Naive thymus-derived CD4-positive, alpha-beta T cell (primary cell): ENCODE measurements at regions of chrX and their contacts with region 1.

Region 1: DNA sequence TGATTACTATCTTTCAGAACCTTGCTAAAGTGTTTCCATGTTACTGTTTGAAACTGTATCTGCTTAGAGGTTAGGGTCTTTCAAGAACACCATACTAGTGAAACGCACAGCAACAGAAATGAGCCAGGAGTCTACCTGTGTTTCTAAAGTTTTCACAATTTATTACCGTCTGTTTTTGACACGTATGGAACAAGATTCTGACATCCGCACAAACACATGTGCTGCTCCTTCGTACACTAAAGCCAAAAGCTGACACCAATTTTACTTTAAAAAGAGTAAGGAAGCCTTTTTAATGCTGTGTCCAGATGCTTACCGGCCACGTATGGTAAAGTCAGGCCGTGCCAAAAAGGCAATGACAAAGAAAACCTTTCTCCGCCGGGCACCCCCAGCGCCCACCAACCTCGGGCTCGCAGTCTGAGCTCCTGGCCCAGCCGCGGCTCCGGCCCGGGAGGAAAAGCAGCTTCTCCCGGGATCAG is 532 bp downstream of the RPS4X start:
- DNase-seq: peak in 1 of 9 donors; percentile 6
- ATAC-seq: peak; percentile 3
- H3K4me3 ChIP-seq: peak overlapping the region; percentile 70
- H3K4me3 Mint-ChIP-seq: peak overlapping the region; percentile 74 to 92 (median 87)
- H3K27ac ChIP-seq: peak overlapping the region; percentile 91
- H3K27ac Mint-ChIP-seq: peak overlapping the region; percentile 78 to 96 (median 92)
- H3K4me1 ChIP-seq: peaks cover 16 to 30% of the 10 kb centered on the region in 2 donors
- H3K4me1 Mint-ChIP-seq: peaks cover 13 to 47% (median 37%) of the 10 kb centered on the region in 7 donors
- H3K27me3 ChIP-seq: no peaks in the 10 kb centered on the region
- H3K27me3 Mint-ChIP-seq: peaks cover 0 to 12% (median 0%) of the 10 kb centered on the region in 5 donors

Region 2: DNA sequence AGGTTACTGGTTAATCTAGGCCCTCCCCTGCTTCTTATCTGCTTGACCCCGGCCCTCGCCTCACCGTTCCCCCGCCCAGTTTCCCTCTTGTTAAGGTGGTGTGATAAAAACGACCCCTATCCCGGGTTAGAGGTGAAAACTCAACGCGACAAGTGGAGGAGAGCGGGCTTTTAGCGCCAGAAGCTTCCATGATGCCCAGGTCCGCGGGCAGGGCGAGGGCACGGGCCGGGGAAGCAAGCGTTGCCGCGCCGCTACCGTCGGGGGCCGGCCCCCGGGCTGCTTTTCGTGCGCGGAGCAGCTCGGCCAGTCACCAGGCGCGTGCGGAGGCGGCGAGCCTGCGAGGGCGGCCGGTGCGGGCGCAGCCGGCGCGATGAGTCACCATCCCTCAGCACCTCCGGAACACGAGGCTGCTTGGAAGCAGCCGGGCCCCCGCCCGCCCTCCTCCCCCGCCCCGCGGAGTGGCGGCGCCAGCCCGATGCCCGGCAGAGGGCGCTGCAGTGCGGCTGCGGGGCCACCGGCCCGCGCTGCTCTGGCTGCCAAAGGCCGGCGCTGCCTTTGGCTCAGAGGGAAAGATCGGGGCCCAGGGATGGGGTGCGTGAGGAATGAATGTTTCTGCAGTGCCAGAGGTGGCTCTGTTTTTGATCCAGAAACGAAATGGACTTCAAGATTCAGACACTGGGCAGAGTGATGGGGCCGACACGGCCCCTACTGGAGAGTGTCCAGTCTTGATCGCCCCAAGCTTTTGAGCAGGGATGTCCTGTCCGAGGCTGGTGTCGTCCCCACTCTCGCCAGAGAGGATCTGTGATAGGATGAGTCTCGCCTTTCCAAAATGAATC is 258.0 kb before region 1 on chrX:
- CTCF ChIA-PET with region 1: interaction called, 3 read pairs
- POLR2A ChIA-PET with region 1: no interaction called
- intact Hi-C with region 1: loop called in 1 of 2 experiments (anchors 5 kb)
- DNase-seq: peak; percentile 41 to 83 (median 69)
- ATAC-seq: peak; percentile 98
- H3K4me3 ChIP-seq: peak overlapping the region; percentile 24
- H3K4me3 Mint-ChIP-seq: peak overlapping the region in 6 of 10 donors; percentile 17 to 51 (median 20)
- H3K27ac ChIP-seq: no peak overlapping the region
- H3K27ac Mint-ChIP-seq: no peak overlapping the region
- H3K4me1 ChIP-seq: peaks cover 0 to 5% of the 10 kb centered on the region in 2 donors
- H3K4me1 Mint-ChIP-seq: peaks cover 0 to 14% (median 0%) of the 10 kb centered on the region in 7 donors
- H3K27me3 ChIP-seq: no peaks in the 10 kb centered on the region
- H3K27me3 Mint-ChIP-seq: peaks cover 2 to 70% (median 3%) of the 10 kb centered on the region in 5 donors

Region 3: DNA sequence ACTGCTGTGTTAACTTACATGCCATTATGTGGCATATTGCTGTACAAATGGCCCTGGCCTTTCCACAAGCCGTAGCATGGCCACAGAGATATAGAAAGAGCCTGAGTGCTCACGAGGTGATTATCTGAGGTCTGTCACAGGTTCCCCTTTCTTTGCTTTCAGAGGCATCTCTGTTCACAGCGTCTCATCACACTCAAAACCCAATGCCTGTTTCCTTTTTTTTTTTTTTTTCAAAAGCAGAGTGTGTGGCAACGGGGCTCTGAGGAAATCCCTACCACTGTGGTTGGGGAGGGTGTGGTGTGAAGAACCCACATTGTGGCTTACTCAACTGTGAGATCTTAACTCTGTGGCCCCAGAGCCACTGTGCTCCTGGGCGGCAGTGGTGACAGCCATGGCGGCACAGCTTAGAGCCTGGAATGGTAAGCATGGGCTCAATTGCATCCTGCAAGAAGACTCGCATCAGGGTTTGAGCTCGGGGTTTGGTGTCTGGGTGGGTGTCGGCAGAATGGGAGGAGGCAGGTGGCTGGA is 175.6 kb before region 1 on chrX:
- CTCF ChIA-PET with region 1: no interaction called
- POLR2A ChIA-PET with region 1: no interaction called
- intact Hi-C with region 1: loop called in 1 of 2 experiments (anchors 2 kb)
- DNase-seq: peak; percentile 24 to 78 (median 67)
- ATAC-seq: peak; percentile 84
- H3K4me3 ChIP-seq: peak overlapping the region; percentile 59
- H3K4me3 Mint-ChIP-seq: peak overlapping the region; percentile 25 to 81 (median 64)
- H3K27ac ChIP-seq: no peak overlapping the region
- H3K27ac Mint-ChIP-seq: peak overlapping the region in 6 of 9 donors; percentile 14 to 82 (median 58)
- H3K4me1 ChIP-seq: peaks cover 29 to 50% of the 10 kb centered on the region in 2 donors
- H3K4me1 Mint-ChIP-seq: peaks cover 10 to 39% (median 33%) of the 10 kb centered on the region in 7 donors
- H3K27me3 ChIP-seq: no peaks in the 10 kb centered on the region
- H3K27me3 Mint-ChIP-seq: peaks cover 6 to 60% (median 12%) of the 10 kb centered on the region in 5 donors

Region 4: GRCh38 chrX:72169008-72169728 is 107.3 kb before region 1 on chrX:
- CTCF ChIA-PET with region 1: no interaction called
- POLR2A ChIA-PET with region 1: no interaction called
- intact Hi-C with region 1: no loop called
- DNase-seq: peak in 7 of 9 donors; percentile 52 to 71 (median 58)
- ATAC-seq: peak; percentile 94
- H3K4me3 ChIP-seq: peak overlapping the region; percentile 28
- H3K4me3 Mint-ChIP-seq: peak overlapping the region; percentile 46 to 89 (median 84)
- H3K27ac ChIP-seq: peak overlapping the region; percentile 66
- H3K27ac Mint-ChIP-seq: peak overlapping the region; percentile 87 to 97 (median 90)
- H3K4me1 ChIP-seq: no peaks in the 10 kb centered on the region
- H3K4me1 Mint-ChIP-seq: peaks cover 0 to 10% (median 5%) of the 10 kb centered on the region in 7 donors
- H3K27me3 ChIP-seq: no peaks in the 10 kb centered on the region
- H3K27me3 Mint-ChIP-seq: peaks cover 0 to 5% (median 0%) of the 10 kb centered on the region in 5 donors

Region 5: GRCh38 chrX:72238721-72239475 is 37.6 kb before region 1 on chrX and contains the start of gene ERCC6L:
- CTCF ChIA-PET with region 1: interaction called, 3 read pairs
- POLR2A ChIA-PET with region 1: interaction called, 9 read pairs
- intact Hi-C with region 1: loop called in 1 of 2 experiments (anchors 2 kb)
- DNase-seq: peak; percentile 71 to 87 (median 81)
- ATAC-seq: peak; percentile 99
- H3K4me3 ChIP-seq: peak within 1 kb of the TSS; percentile 62
- H3K4me3 Mint-ChIP-seq: peak within 1 kb of the TSS; percentile 45 to 87 (median 76)
- H3K27ac ChIP-seq: peak within 1 kb of the TSS; percentile 47
- H3K27ac Mint-ChIP-seq: peak within 1 kb of the TSS in 7 of 9 donors; percentile 48 to 91 (median 56)
- H3K4me1 ChIP-seq: no peaks in the 10 kb centered on the region
- H3K4me1 Mint-ChIP-seq: peaks cover 0 to 17% (median 0%) of the 10 kb centered on the region in 7 donors
- H3K27me3 ChIP-seq: no peaks in the 10 kb centered on the region
- H3K27me3 Mint-ChIP-seq: no peaks in the 10 kb centered on the region
- total RNA-seq, gene ERCC6L: 0.11 to 6.6 (median 0.16) TPM

Region 6: DNA sequence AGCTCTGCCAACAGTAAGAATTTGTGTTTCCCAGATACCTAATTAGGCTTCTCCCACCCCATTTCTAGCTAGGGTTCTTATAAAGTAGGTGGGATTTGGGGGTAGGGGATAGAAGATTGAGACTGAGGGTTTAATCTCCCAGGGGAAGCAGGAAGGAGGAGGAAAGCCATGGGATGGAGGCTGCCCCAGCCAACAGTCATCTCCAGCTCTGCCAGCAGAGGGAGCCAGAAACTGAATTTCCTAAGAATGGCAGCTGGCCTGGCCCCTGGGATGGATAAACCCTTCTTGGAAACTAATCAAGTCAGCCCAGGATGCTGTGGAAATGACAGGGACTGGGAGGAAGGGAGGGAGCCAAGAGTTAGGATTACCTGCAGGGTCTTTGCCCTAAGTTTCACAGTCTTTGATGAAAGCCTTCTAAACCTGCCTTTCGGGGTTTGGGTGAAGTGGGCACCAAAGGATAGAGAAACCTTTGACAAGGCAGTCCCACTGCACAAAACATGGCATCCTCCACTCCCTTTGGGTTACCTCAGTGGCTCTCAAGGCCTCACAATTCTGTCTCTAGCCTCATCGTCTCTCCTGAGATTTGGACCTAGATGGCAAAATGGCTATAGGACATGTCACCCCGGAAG is 30.9 kb before region 1 on chrX:
- CTCF ChIA-PET with region 1: no interaction called
- POLR2A ChIA-PET with region 1: interaction called, 3 read pairs
- intact Hi-C with region 1: loop called in 1 of 2 experiments (anchors 1 kb)
- DNase-seq: peak in 6 of 9 donors; percentile 5 to 42 (median 18)
- ATAC-seq: no peak
- H3K4me3 ChIP-seq: no peak overlapping the region
- H3K4me3 Mint-ChIP-seq: no peak overlapping the region
- H3K27ac ChIP-seq: no peak overlapping the region
- H3K27ac Mint-ChIP-seq: no peak overlapping the region
- H3K4me1 ChIP-seq: no peaks in the 10 kb centered on the region
- H3K4me1 Mint-ChIP-seq: peaks cover 0 to 2% (median 0%) of the 10 kb centered on the region in 7 donors
- H3K27me3 ChIP-seq: no peaks in the 10 kb centered on the region
- H3K27me3 Mint-ChIP-seq: no peaks in the 10 kb centered on the region

Region 7: GRCh38 chrX:72572248-72573157 is 296.0 kb after region 1 on chrX and contains the start of gene HDAC8:
- CTCF ChIA-PET with region 1: no interaction called
- POLR2A ChIA-PET with region 1: interaction called, 7 read pairs
- intact Hi-C with region 1: loop called (anchors 1 to 2 kb)
- DNase-seq: peak; percentile 7 to 49 (median 29)
- ATAC-seq: peak; percentile 91
- H3K4me3 ChIP-seq: peak within 1 kb of the TSS; percentile 97
- H3K4me3 Mint-ChIP-seq: peak within 1 kb of the TSS; percentile 91 to 98 (median 96)
- H3K27ac ChIP-seq: peak within 1 kb of the TSS; percentile 71
- H3K27ac Mint-ChIP-seq: peak within 1 kb of the TSS; percentile 36 to 91 (median 87)
- H3K4me1 ChIP-seq: peaks cover 4 to 6% of the 10 kb centered on the region in 2 donors
- H3K4me1 Mint-ChIP-seq: peaks cover 0 to 10% (median 6%) of the 10 kb centered on the region in 7 donors
- H3K27me3 ChIP-seq: no peaks in the 10 kb centered on the region
- H3K27me3 Mint-ChIP-seq: peaks cover 0 to 11% (median 0%) of the 10 kb centered on the region in 5 donors
- total RNA-seq, gene HDAC8: 13.1 to 30.6 (median 19.7) TPM

Region 8: DNA sequence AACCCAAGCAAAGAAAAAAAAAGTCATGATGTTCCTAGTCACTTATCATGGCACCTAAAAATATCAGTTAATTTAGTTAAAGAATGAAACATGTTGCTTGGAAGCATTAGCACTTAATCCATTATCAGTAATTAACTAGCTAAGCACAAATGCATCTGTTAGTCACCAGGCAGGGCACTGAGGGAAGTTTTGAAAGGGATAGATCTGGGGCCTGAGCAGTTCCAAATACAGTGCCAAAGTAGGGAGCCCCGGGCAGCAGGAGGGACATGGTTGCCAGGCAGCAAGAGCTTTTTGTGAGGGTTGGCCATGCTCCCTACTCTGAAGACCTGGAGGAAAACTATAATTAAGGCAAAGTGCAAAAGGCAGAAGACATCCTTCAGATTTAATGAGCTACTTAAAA is 375.6 kb after region 1 on chrX:
- CTCF ChIA-PET with region 1: no interaction called
- POLR2A ChIA-PET with region 1: no interaction called
- intact Hi-C with region 1: no loop called
- DNase-seq: no peak
- ATAC-seq: no peak
- H3K4me3 ChIP-seq: no peak overlapping the region
- H3K4me3 Mint-ChIP-seq: no peak overlapping the region
- H3K27ac ChIP-seq: no peak overlapping the region
- H3K27ac Mint-ChIP-seq: no peak overlapping the region
- H3K4me1 ChIP-seq: no peaks in the 10 kb centered on the region
- H3K4me1 Mint-ChIP-seq: no peaks in the 10 kb centered on the region
- H3K27me3 ChIP-seq: no peaks in the 10 kb centered on the region
- H3K27me3 Mint-ChIP-seq: no peaks in the 10 kb centered on the region

Region 9: GRCh38 chrX:73562984-73563737 is 1286.6 kb after region 1 on chrX and contains the start of gene CHIC1:
- CTCF ChIA-PET with region 1: no interaction called
- POLR2A ChIA-PET with region 1: no interaction called
- intact Hi-C with region 1: loop called in 1 of 2 experiments (anchors 5 kb)
- DNase-seq: peak; percentile 33 to 80 (median 71)
- ATAC-seq: peak; percentile 80
- H3K4me3 ChIP-seq: peak within 1 kb of the TSS; percentile 73
- H3K4me3 Mint-ChIP-seq: peak within 1 kb of the TSS; percentile 91 to 99 (median 96)
- H3K27ac ChIP-seq: peak within 1 kb of the TSS; percentile 81
- H3K27ac Mint-ChIP-seq: peak within 1 kb of the TSS; percentile 96 to 100 (median 98)
- H3K4me1 ChIP-seq: no peaks in the 10 kb centered on the region
- H3K4me1 Mint-ChIP-seq: peaks cover 7 to 26% (median 13%) of the 10 kb centered on the region in 7 donors
- H3K27me3 ChIP-seq: no peaks in the 10 kb centered on the region
- H3K27me3 Mint-ChIP-seq: no peaks in the 10 kb centered on the region
- total RNA-seq, gene CHIC1: 7.8 to 17.3 (median 10.7) TPM